CD4-positive, alpha-beta T cell (primary cell): ENCODE measurements at regions of chr7 and their contacts with region 1.

Region 1: GRCh38 chr7:158782761-158783401 is 46.4 kb downstream of the ESYT2 start:
- DNase-seq: peak in 5 of 14 experiments; percentile 13 to 55 (median 28)
- ATAC-seq: peak; percentile 19
- H3K4me3 ChIP-seq: no peak overlapping the region
- H3K4me3 Mint-ChIP-seq: no peak overlapping the region
- H3K27ac ChIP-seq: no peak overlapping the region
- H3K27ac Mint-ChIP-seq: no peak overlapping the region
- H3K4me1 ChIP-seq: peaks cover 29% of the 10 kb centered on the region
- H3K4me1 Mint-ChIP-seq: peaks cover 7% of the 10 kb centered on the region
- H3K27me3 ChIP-seq: no peaks in the 10 kb centered on the region
- H3K27me3 Mint-ChIP-seq: no peaks in the 10 kb centered on the region
- CTCF ChIP-seq: no peak

Region 2: DNA sequence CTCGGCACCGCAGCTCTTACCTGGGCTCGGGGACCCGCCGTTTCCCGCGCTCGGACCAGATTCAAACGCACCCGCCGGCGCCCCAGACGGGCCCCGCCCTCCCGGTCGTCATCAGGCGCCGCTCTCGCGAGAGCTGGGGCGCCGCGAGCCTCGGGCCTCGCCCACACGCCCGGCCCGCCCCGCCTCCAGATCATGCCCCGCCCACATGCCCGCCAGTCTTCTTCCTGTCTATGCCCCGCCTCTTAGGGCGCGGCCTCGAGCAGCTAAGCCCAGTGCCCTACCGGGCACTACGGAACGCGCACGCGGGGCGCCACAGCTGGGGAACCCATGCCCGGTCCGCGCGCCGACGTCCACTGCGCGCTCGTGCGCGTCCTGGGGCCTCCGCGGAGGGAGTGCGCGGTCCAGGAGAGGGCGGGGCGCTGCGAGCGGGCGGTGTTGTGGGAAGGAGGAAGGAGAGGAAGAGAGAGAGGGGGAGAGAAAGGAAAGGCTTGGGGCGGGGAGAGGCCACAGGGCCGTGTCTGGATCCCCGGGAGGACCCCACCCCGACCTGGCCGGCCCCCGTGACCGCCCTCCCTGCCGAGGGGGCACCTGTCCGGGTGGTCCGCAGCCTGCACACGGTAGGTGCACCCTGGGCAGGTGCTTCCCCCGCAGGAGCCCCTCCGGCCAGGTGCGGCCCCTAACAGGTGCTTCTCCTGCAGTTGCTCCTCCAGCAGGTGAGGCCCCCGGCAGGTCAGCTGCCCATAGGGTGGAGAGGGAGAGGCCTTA is 78.0 kb before region 1 on chr7 and contains the start of gene NCAPG2:
- CTCF ChIA-PET with region 1: no interaction called
- POLR2A ChIA-PET with region 1: interaction called, 3 read pairs
- intact Hi-C with region 1: loop called in 1 of 2 experiments (anchors 5 kb)
- DNase-seq: peak; percentile 97 to 100 (median 98)
- ATAC-seq: peak; percentile 98
- H3K4me3 ChIP-seq: peak within 1 kb of the TSS; percentile 97
- H3K4me3 Mint-ChIP-seq: peak within 1 kb of the TSS; percentile 96
- H3K27ac ChIP-seq: peak within 1 kb of the TSS; percentile 52 to 70
- H3K27ac Mint-ChIP-seq: peak within 1 kb of the TSS; percentile 62
- H3K4me1 ChIP-seq: peaks cover 23% of the 10 kb centered on the region
- H3K4me1 Mint-ChIP-seq: peaks cover 24% of the 10 kb centered on the region
- H3K27me3 ChIP-seq: no peaks in the 10 kb centered on the region
- H3K27me3 Mint-ChIP-seq: no peaks in the 10 kb centered on the region
- CTCF ChIP-seq: peak; percentile 16
- total RNA-seq, gene NCAPG2: 9.9 to 11.8 TPM

Region 3: DNA sequence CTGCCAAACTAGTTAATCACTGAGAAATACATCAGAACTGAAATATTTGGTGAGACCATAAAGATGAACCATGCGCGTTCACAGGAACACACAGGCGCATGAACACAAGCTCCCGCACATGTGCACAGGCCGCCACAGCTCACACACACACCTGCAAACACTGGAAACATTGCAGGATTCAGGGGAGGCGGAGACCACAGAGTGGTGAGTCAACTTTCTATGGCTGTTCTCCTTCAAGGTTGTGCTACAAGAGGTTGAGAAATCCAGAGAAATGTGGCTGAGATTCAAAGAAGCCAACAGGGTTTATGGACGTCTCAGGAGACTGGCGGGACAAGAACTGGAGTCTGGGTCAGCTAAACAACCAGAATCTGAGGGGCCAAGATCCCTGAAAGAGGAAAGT is 28.6 kb after region 1 on chr7:
- CTCF ChIA-PET with region 1: interaction called, 3 read pairs
- POLR2A ChIA-PET with region 1: interaction called, 25 read pairs
- intact Hi-C with region 1: loop called in 1 of 2 experiments (anchors 2 kb)
- DNase-seq: peak in 7 of 14 experiments; percentile 33 to 66 (median 49)
- ATAC-seq: peak; percentile 13
- H3K4me3 ChIP-seq: no peak overlapping the region
- H3K4me3 Mint-ChIP-seq: peak overlapping the region; percentile 81
- H3K27ac ChIP-seq: peak overlapping the region; percentile 72 to 86
- H3K27ac Mint-ChIP-seq: peak overlapping the region; percentile 97
- H3K4me1 ChIP-seq: peaks cover 78% of the 10 kb centered on the region
- H3K4me1 Mint-ChIP-seq: peaks cover 94% of the 10 kb centered on the region
- H3K27me3 ChIP-seq: no peaks in the 10 kb centered on the region
- H3K27me3 Mint-ChIP-seq: no peaks in the 10 kb centered on the region
- CTCF ChIP-seq: no peak

Region 4: DNA sequence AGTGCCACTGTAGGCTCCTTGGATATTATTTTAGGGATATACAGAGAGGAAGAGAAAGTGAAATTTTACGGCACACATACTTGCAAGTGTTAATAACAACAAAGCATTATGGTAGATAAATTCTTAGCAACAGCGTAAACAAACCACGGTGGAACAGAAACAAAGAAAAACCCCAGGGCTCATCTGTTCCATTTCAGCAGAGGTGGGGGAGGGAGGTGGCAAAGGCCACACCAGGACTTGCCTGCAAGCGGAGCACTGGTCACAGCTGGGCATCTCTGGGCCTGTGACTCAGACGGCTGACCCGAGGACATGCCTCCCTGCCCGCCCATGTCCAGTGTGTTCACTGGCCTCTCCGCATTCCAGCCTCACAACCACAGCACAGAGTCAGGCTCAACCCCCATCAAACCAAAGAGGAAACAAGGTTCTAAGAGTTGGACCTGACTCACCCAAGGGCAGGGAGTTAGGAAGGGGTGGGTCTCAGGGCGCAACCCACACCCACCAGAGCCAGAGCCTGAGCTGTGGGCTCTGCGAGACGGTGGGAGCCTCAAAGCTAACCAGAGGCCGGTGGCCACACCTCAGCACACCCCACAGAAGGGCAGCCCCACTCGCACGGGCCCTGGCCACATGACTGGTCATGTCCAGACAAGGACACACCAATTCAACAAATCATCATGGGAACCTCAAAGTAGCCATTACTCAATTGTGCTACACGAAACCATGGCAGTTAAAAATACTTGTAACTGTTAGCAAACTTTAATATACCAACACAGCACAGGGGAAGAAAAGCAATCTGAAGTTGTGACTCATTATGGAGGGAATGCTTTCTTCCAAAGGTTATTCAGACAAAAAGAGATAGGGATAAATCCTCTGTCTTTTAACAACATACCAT is 35.7 kb after region 1 on chr7:
- CTCF ChIA-PET with region 1: no interaction called
- POLR2A ChIA-PET with region 1: interaction called, 25 read pairs
- intact Hi-C with region 1: loop called in 1 of 2 experiments (anchors 2 kb)
- DNase-seq: peak; percentile 35 to 94 (median 62)
- ATAC-seq: peak; percentile 63
- H3K4me3 ChIP-seq: peak overlapping the region; percentile 58
- H3K4me3 Mint-ChIP-seq: peak overlapping the region; percentile 81
- H3K27ac ChIP-seq: peak overlapping the region; percentile 88 to 96
- H3K27ac Mint-ChIP-seq: peak overlapping the region; percentile 97
- H3K4me1 ChIP-seq: peaks cover 75% of the 10 kb centered on the region
- H3K4me1 Mint-ChIP-seq: peaks cover 90% of the 10 kb centered on the region
- H3K27me3 ChIP-seq: no peaks in the 10 kb centered on the region
- H3K27me3 Mint-ChIP-seq: no peaks in the 10 kb centered on the region
- CTCF ChIP-seq: no peak

Region 5: DNA sequence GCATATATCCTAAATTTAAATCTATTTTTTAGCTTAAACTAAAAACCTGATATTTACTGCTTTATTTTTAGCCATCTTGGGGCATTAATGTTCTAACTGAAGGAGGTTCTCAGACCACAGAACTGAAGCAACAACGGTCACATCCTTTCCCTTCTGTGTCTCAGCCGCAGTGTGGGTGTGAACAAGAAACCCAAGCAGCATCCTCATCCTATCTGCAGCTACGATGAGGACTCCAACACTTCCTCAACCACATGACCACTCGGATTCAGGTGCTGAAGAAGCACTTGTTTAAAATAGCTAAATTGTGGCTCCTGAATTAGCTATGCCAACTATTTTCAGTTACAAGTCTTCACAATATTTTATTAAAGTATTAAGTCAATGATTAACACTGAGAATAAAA is 41.1 kb after region 1 on chr7:
- CTCF ChIA-PET with region 1: interaction called, 7 read pairs
- POLR2A ChIA-PET with region 1: interaction called, 10 read pairs
- intact Hi-C with region 1: loop called in 1 of 2 experiments (anchors 1 kb)
- DNase-seq: peak in 10 of 14 experiments; percentile 41 to 95 (median 58)
- ATAC-seq: peak; percentile 75
- H3K4me3 ChIP-seq: no peak overlapping the region
- H3K4me3 Mint-ChIP-seq: peak overlapping the region; percentile 84
- H3K27ac ChIP-seq: peak overlapping the region in 1 of 2 donors; percentile 53
- H3K27ac Mint-ChIP-seq: peak overlapping the region; percentile 90
- H3K4me1 ChIP-seq: peaks cover 59% of the 10 kb centered on the region
- H3K4me1 Mint-ChIP-seq: peaks cover 70% of the 10 kb centered on the region
- H3K27me3 ChIP-seq: no peaks in the 10 kb centered on the region
- H3K27me3 Mint-ChIP-seq: no peaks in the 10 kb centered on the region
- CTCF ChIP-seq: no peak